ENCODE measurements at regions of chr1 and their contacts with region 1.

Region 1: DNA sequence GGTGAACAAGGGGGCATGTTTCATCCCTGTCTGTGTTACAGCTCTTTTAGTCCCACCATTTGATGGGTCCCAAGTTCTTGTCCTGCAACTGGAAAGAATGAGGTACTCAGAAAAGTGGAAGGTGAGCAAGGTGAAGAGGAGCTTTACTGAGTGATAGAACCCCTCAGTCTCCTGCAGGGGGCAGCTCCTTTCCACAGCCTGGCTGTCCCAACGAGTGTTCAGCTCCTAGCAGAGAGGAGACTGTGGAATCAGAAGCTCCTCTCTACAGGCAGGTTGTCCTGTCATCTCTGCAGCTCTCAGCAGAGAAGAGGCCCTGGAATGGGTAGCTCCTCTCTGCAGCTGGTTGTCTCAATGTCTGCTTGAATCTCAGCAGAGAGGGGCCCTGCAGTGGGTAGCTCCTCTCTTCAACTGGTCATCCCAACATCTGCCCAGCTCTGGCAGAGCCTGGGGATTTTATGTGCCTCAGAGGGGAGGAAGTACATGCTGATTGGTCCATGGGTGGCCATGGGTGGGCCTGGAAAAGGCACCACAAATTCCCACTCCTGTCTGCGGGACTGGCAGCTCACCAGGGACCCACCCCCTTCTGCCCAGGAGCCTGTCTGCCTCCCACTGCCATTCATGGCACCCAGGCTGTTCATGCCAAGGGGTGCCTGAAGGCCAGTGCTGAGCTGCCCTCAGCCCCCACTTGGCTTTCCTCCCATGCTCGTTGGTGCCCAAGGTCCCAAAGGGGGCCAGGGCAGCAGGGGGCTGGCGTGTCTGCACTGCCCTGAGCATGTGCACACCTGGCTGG is 25.7 kb downstream of the LDLRAD1 start:
- DNase-seq: no peak
- H3K4me3 ChIP-seq: no peak overlapping the region
- H3K27ac ChIP-seq: no peak overlapping the region
- H3K4me1 ChIP-seq: no peaks in the 10 kb centered on the region
- H3K27me3 ChIP-seq: no peaks in the 10 kb centered on the region
- CTCF ChIP-seq: peak; percentile 59 to 80 (median 60)
- EP300 ChIP-seq: no peak
- POLR2A ChIP-seq: no peak
- RAD21 ChIP-seq: peak; percentile 76 to 78

Region 2: DNA sequence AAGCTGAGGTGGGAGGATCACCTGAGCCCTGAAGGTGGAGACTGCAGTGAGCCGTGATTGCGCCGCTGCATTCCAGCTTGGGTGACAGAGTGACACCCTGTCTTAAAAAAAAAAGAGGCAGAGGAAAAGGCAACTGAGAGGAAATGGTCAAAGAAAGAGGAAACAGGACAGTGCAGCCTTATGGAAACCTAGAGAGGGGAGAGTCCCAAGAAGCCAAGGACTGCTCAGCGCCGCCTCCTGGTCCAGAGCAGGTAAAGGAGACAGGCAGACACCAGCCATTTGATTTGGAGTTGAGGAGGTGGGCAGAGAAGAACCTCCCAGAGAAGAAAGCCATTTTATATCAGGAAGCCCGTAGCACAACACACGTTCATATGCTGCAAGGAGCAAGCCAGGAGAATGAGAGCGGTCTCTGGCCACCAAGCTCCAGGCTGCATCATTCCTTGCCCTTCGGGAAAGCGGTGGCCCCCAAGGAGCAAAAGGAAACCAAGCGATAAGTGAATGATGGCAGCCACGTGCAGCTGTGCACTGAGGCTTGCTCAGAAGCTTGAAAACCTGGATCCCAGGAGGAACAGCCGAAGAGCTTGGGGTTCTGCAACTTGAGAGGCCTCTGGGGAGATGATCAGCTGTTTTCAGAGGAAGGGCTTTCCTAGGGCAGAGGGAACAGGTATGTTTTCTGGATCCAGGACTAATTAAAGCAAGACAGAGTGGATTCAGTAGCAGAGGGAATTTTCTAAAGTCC is 12.4 kb before region 1 on chr1:
- CTCF ChIA-PET with region 1: interaction called, 18 read pairs
- POLR2A ChIA-PET with region 1: interaction called, 4 read pairs
- DNase-seq: no peak
- H3K4me3 ChIP-seq: no peak overlapping the region
- H3K27ac ChIP-seq: no peak overlapping the region
- H3K4me1 ChIP-seq: peaks cover 0 to 5% (median 0%) of the 10 kb centered on the region in 4 experiments; a peak in 2 of 7 replicates
- H3K27me3 ChIP-seq: peaks cover 0 to 2% (median 0%) of the 10 kb centered on the region in 4 experiments; a peak in 1 of 7 replicates
- CTCF ChIP-seq: peak in 2 of 3 experiments; percentile 32 to 43; a peak in 3 of 4 replicates
- EP300 ChIP-seq: no peak
- POLR2A ChIP-seq: no peak
- RAD21 ChIP-seq: peak; percentile 15 to 37; a peak in 3 of 4 replicates

Region 3: GRCh38 chr1:54004481-54005049 is 12.3 kb after region 1 on chr1:
- CTCF ChIA-PET with region 1: interaction called, 18 read pairs
- POLR2A ChIA-PET with region 1: interaction called, 4 read pairs
- DNase-seq: no peak
- H3K4me3 ChIP-seq: no peak overlapping the region; a peak in 1 of 8 replicates
- H3K27ac ChIP-seq: no peak overlapping the region
- H3K4me1 ChIP-seq: no peaks in the 10 kb centered on the region
- H3K27me3 ChIP-seq: no peaks in the 10 kb centered on the region
- CTCF ChIP-seq: no peak
- EP300 ChIP-seq: no peak
- POLR2A ChIP-seq: no peak
- RAD21 ChIP-seq: no peak

Region 4: GRCh38 chr1:54047384-54048305 is 55.4 kb after region 1 on chr1:
- CTCF ChIA-PET with region 1: interaction called, 10 read pairs
- POLR2A ChIA-PET with region 1: interaction called, 6 read pairs
- DNase-seq: no peak
- H3K4me3 ChIP-seq: no peak overlapping the region
- H3K27ac ChIP-seq: no peak overlapping the region
- H3K4me1 ChIP-seq: peaks cover 0 to 5% (median 1%) of the 10 kb centered on the region in 4 experiments; a peak in 3 of 7 replicates
- H3K27me3 ChIP-seq: no peaks in the 10 kb centered on the region
- CTCF ChIP-seq: no peak
- EP300 ChIP-seq: no peak
- POLR2A ChIP-seq: no peak
- RAD21 ChIP-seq: no peak

Measured in H1 (cell line).